Activated CD4-positive, alpha-beta T cell treated with anti-CD3 and anti-CD28 coated beads, Interleukin-2, amount 10 ng/mL, durations not matched to agents 7 days and 5 days (primary cell): ENCODE measurements at regions of chr11 and their contacts with region 1.

Region 1: DNA sequence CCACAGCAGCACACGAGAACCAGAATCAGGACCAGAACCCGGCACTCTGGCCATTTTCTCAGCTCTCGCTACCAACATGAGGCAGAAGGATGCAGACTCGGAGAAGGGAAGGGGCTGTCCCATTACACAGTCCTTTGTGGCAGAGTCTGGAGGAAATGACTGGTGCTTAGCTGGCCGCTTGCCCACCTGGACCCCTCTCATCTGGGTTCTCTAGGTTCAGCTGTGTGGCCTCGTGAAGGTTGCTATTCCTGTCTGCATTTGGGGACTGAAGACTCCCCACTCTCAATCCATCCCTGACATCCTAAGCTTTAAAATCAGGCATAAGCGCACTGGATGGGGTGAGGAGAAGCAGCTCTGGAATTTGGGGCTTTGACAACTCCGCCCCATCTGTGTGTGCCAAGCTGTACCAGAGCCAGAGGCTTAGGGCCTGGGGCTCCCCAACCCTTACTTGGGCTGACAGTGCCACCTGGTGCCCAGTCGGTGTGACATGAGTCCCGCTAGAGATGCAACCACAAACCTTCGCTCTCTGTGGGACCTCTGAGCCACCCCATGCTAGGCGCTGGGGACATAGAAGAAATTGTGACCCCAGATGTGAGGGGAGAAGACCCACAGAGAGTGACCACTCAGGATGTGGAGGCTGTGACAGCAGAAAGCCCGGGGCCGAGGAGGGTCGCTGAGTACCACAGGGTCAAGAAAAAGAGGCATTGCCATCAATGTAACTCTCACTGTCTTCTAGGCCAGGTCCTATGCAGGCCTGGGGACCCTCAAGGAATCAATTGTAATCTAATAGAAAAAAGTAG is 35.9 kb upstream of the FCHSD2 start:
- DNase-seq: peak; percentile 87
- H3K4me3 Mint-ChIP-seq: no peak overlapping the region
- H3K27ac Mint-ChIP-seq: no peak overlapping the region
- H3K4me1 Mint-ChIP-seq: peaks cover 26% of the 10 kb centered on the region
- H3K27me3 Mint-ChIP-seq: peaks cover 16% of the 10 kb centered on the region

Region 2: DNA sequence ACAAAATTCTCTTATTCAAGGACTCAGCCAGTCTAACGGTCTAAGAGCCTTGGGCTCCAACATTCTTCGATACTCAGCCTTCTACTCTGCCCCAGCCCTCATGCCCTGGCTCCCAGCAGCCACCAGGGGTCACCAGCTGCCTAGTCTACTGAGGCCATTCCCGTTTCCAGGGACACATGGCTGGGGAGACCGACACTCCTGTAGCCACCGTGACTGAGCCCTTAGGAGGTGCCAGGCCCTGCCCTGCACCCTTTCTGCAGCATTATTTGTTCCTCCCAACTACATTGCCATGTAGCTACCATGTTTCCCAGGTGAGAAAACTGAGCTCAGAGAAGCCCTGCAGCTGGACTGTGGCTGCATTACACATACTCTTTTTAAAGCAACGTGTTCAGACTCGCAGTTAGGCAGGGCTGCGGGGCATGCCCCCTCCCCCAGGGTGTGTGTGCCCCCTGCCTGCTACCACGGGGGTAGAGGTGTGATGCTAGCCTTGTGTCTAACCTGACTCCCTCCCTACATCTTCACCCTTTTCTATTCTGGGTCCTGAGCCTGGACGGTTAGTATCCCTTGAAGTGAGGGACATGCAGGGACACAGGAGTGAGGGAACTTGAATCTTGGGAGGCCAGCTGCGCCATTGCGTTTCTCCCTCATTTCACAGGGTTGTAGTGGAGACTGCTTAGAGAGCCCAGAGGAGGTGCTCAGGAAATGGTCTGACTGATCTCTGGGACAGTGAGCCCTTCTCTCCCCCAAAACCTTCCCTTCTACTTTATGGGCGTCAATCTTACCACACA is 346.3 kb before region 1 on chr11:
- CTCF ChIA-PET with region 1: interaction called, 13 read pairs
- POLR2A ChIA-PET with region 1: no interaction called
- DNase-seq: peak; percentile 59
- H3K4me3 Mint-ChIP-seq: no peak overlapping the region
- H3K27ac Mint-ChIP-seq: no peak overlapping the region
- H3K4me1 Mint-ChIP-seq: peaks cover 38% of the 10 kb centered on the region
- H3K27me3 Mint-ChIP-seq: no peaks in the 10 kb centered on the region

Region 3: DNA sequence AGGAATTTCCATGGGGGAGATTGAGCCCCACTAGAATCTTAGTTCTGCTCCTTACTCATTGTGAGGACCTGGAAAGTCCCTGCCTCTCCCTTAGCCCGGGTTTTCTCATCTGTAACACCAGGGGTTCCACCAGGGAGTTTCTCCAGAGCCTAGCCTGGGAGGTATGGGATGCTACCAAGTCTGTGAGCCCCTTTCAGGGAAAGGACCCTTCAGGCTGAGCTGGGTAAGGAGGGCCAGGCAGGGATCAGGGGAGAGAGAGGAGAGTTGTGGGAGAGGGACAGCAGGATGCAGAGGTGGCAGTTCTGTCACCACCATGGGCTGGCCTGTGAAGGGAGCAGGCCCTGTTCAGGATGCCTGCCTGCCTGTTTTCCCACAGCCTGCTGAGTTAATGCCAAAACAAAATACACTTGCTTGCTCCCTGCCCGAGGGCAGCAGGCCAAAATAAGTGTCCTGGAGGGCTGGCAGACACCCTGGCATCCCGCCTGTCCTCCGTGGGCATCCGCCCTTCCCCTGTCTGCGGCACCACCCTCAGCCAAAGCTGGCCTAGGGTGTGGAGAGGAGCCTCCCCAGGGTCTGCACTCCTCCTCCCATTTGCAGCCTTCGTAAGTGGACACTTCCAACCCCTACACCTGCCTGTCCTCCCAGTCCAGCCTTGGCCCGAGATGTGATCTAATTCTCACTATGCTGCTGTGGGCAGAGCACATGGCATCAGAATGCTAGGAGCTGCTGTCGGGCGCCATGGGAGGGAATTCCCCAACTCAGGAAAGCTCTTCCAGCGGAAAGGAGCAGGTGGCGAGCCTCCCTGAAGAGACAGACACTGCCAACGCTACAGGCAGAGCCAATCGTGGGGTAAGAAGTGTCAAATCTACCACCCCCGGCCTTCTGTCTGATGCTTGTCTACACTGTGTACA is 30.0 kb before region 1 on chr11:
- CTCF ChIA-PET with region 1: interaction called, 19 read pairs
- POLR2A ChIA-PET with region 1: no interaction called
- DNase-seq: no peak
- H3K4me3 Mint-ChIP-seq: no peak overlapping the region
- H3K27ac Mint-ChIP-seq: no peak overlapping the region
- H3K4me1 Mint-ChIP-seq: peaks cover 79% of the 10 kb centered on the region
- H3K27me3 Mint-ChIP-seq: no peaks in the 10 kb centered on the region

Region 4: GRCh38 chr11:73189315-73189714 is 11.3 kb after region 1 on chr11:
- CTCF ChIA-PET with region 1: interaction called, 18 read pairs
- POLR2A ChIA-PET with region 1: no interaction called
- DNase-seq: no peak
- H3K4me3 Mint-ChIP-seq: no peak overlapping the region
- H3K27ac Mint-ChIP-seq: no peak overlapping the region
- H3K4me1 Mint-ChIP-seq: peaks cover 8% of the 10 kb centered on the region
- H3K27me3 Mint-ChIP-seq: peaks cover 2% of the 10 kb centered on the region

Region 5: GRCh38 chr11:73227206-73227587 is 49.2 kb after region 1 on chr11:
- CTCF ChIA-PET with region 1: no interaction called
- POLR2A ChIA-PET with region 1: no interaction called
- DNase-seq: no peak
- H3K4me3 Mint-ChIP-seq: no peak overlapping the region
- H3K27ac Mint-ChIP-seq: no peak overlapping the region
- H3K4me1 Mint-ChIP-seq: peaks cover 3% of the 10 kb centered on the region
- H3K27me3 Mint-ChIP-seq: peaks cover 16% of the 10 kb centered on the region